ENCODE measurements at regions of chr13 and their contacts with region 1.

Region 1: DNA sequence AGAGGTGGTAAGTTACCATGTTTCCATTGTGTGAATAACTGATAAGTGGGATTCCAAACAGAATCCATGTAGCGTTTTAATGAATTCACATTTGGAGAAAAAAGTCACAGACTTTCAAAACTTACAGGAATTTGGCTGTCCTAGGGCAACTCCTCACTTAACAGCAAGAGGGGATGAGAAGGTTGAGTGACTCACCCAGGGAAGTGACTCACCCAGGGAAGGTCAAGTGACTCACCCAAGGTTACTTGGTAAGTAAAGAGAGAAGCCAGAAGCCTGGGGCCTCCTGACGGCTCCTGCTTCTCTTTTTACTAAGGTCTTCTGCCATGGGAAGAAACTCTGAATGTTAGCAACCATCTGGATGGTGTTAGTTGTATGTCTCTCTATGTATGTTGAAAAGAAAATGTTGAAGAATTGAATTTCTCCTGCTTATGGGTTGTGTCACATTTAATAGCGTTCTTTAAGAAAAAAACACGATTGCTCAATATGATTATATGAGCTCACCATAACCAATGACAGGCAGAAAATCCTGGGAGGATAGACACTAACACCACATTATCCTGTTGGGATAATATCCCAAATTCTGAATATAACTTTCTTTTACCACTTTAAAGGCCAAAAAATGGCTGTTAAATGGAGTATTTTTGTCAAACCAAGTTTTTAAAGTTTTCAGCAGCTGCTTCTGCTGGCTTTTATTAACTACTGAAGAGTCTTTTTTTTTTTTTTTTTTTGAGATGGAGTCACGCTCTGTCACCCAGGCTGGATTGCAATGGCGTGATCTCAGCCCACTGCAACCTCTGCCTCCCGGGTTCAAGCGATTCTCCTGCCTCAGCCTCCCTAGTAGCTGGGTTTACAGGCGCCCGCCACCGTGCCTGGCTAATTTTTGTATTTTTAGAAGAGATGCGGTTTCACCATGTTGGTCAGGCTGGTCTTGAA is 195.6 kb downstream of the GGACT start:
- DNase-seq: peak; percentile 99
- H3K4me3 ChIP-seq: no peak overlapping the region
- H3K27ac ChIP-seq: peak overlapping the region; percentile 87
- H3K4me1 ChIP-seq: peaks cover 35% of the 10 kb centered on the region
- H3K27me3 ChIP-seq: no peaks in the 10 kb centered on the region
- CTCF ChIP-seq: no peak
- POLR2A ChIP-seq: no peak

Region 2: DNA sequence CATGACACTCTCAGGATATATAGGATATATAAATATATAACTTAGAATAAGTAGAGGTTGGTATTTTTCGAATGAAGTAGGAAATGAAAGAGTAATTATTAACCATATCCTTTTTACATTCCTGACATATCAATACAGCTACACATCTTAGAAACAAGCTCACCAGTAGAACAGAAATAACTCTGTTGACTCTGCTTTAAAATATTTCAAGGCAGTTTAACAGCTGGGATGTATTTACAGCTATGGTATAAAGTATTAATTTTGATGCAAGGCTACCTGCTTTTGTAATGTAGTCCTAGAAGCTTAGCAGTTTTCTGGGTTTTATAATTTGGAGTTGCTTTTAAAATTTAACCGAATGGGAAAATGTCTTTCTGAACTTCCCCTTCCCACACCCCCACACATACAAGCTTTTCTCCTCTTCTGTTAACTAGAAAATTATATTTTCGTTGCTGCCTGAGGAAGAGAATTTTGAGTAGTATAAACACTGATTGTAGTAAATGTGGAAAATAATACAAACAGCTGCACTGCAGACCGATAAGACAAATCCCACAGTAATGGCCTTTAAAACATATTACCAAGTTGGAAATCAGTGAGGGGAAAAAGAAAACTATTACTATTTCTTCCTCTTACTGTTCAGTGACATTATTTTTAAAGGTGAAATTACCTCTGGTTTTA is 47.9 kb after region 1 on chr13:
- CTCF ChIA-PET with region 1: interaction called, 3 read pairs
- POLR2A ChIA-PET with region 1: no interaction called
- dilution Hi-C with region 1: no loop called
- intact Hi-C with region 1: loop called (anchors 5 kb)
- DNase-seq: peak; percentile 63
- H3K4me3 ChIP-seq: peak overlapping the region in 1 of 3 experiments; percentile 20
- H3K27ac ChIP-seq: peak overlapping the region; percentile 65
- H3K4me1 ChIP-seq: peaks cover 15% of the 10 kb centered on the region
- H3K27me3 ChIP-seq: no peaks in the 10 kb centered on the region
- CTCF ChIP-seq: no peak
- POLR2A ChIP-seq: no peak

Region 3: DNA sequence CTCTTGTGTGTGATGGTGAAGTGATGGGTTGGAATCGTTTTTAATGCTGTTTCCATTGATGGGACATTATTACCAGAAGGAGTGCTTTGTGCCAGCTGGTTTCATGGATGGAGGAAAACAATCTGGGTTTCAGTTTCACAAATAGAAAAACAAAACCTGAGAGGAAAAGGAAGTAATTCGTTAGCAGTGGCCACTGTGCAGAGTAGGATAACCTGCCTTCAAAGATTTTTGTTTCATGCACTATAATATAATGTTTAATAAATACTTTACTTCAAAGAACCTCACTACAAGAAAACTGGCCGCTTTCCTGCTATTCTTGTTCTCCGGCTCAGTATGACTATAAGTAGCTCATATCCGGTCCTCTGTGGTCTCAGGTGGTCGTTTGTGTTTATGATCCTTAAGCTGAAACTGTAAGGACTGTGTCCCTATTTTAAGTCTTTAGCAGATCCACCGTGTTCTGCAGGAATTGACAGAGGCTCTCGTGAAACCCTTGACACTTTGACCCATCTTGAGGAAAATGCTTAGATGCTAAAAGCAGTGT is 90.9 kb after region 1 on chr13:
- CTCF ChIA-PET with region 1: no interaction called
- POLR2A ChIA-PET with region 1: no interaction called
- dilution Hi-C with region 1: no loop called
- intact Hi-C with region 1: loop called (anchors 5 kb)
- DNase-seq: peak; percentile 57
- H3K4me3 ChIP-seq: no peak overlapping the region
- H3K27ac ChIP-seq: no peak overlapping the region
- H3K4me1 ChIP-seq: peaks cover 7% of the 10 kb centered on the region
- H3K27me3 ChIP-seq: no peaks in the 10 kb centered on the region
- CTCF ChIP-seq: no peak
- POLR2A ChIP-seq: no peak

Measured in endothelial cell of umbilical vein (primary cell).